MCF 10A (cell line): ENCODE measurements at regions of chr13 and their contacts with region 1.

Region 1: DNA sequence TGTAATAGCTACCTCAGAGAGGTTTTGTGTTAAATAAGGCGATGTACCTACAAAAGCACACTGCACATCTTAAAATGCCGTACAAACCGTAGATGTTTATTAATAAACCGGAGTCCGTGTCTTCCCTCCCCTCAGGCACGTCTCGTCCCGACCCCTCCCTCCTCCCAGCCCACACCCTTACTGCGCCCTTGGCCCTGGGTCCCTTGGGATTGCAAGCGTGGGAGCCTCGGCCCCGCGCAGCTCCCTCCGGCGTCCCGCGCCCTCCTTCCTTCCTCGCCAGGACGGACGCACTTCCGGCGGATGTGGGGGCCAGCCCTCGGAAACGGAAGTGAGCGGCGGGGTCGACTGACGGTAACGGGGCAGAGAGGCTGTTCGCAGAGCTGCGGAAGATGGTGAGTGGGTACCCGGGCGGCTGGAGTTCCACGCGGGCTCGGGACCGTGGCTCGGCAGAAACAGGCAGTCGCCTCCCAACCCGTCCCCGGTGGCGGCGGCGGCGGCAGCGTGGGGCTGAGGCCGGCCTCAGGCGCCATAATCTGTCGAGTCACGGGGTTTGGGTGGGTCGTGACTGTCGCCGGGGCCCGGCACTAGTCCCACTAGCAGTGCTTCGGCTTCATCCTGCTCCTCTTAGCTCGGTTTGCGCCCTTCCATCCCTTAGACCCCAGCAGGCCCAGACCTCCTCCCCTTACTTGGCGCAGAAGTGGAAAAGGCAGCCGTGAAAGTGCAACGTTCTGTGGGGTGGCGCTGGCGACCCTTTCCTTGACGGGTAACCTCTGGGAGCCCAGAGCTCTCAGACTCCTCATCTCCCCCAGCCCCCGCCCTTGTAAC is at the start of gene POMP:
- DNase-seq: peak; percentile 94
- H3K4me3 Mint-ChIP-seq: peak within 1 kb of the TSS; percentile 90
- H3K27ac Mint-ChIP-seq: peak within 1 kb of the TSS; percentile 97
- H3K4me1 Mint-ChIP-seq: peaks cover 48% of the 10 kb centered on the region
- H3K27me3 Mint-ChIP-seq: no peaks in the 10 kb centered on the region
- CTCF ChIP-seq: no peak
- total RNA-seq, gene POMP: 103 and 136 TPM in 2 replicates

Region 2: GRCh38 chr13:28138012-28138755 is 520.8 kb before region 1 on chr13 and contains the start of gene PAN3:
- CTCF ChIA-PET with region 1: no interaction called
- POLR2A ChIA-PET with region 1: interaction called, 17 read pairs
- intact Hi-C with region 1: no loop called
- DNase-seq: peak; percentile 90
- H3K4me3 Mint-ChIP-seq: peak within 1 kb of the TSS; percentile 94
- H3K27ac Mint-ChIP-seq: peak within 1 kb of the TSS; percentile 99
- H3K4me1 Mint-ChIP-seq: peaks cover 29% of the 10 kb centered on the region
- H3K27me3 Mint-ChIP-seq: no peaks in the 10 kb centered on the region
- CTCF ChIP-seq: no peak
- total RNA-seq, gene PAN3: 32.9 and 33.0 TPM in 2 replicates

Region 3: DNA sequence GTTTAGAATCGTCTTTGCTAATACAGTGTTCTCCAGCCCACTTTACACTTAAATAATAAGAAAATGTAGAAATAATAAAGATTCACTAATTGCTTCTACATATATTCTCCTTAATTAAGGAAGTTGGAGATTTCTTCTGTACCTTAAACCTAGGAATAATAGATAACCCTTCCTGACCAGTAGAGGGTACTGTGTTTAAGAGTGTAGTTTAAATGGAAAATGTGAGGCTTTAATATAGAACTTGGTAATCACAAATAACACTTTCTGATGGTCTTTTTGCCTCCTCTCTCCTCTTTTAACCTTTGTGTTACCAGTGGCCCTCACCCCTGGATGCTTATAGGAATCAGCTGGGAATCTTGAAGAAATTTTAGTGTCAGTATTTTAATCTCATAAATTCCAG is 20.6 kb after region 1 on chr13:
- CTCF ChIA-PET with region 1: interaction called, 10 read pairs
- POLR2A ChIA-PET with region 1: interaction called, 9 read pairs
- intact Hi-C with region 1: no loop called
- DNase-seq: peak; percentile 27
- H3K4me3 Mint-ChIP-seq: no peak overlapping the region
- H3K27ac Mint-ChIP-seq: no peak overlapping the region
- H3K4me1 Mint-ChIP-seq: no peaks in the 10 kb centered on the region
- H3K27me3 Mint-ChIP-seq: no peaks in the 10 kb centered on the region
- CTCF ChIP-seq: peak; percentile 30

Region 4: GRCh38 chr13:28718543-28719226 is 59.7 kb after region 1 on chr13 and contains the start of gene SLC46A3:
- CTCF ChIA-PET with region 1: no interaction called
- POLR2A ChIA-PET with region 1: interaction called, 29 read pairs
- intact Hi-C with region 1: no loop called
- DNase-seq: peak; percentile 96
- H3K4me3 Mint-ChIP-seq: peak within 1 kb of the TSS; percentile 81
- H3K27ac Mint-ChIP-seq: peak within 1 kb of the TSS; percentile 93
- H3K4me1 Mint-ChIP-seq: peaks cover 33% of the 10 kb centered on the region
- H3K27me3 Mint-ChIP-seq: no peaks in the 10 kb centered on the region
- CTCF ChIP-seq: no peak
- total RNA-seq, gene SLC46A3: 6.4 and 8.1 TPM in 2 replicates